Naive thymus-derived CD4-positive, alpha-beta T cell (primary cell): ENCODE measurements at regions of chr19 and their contacts with region 1.

Region 1: DNA sequence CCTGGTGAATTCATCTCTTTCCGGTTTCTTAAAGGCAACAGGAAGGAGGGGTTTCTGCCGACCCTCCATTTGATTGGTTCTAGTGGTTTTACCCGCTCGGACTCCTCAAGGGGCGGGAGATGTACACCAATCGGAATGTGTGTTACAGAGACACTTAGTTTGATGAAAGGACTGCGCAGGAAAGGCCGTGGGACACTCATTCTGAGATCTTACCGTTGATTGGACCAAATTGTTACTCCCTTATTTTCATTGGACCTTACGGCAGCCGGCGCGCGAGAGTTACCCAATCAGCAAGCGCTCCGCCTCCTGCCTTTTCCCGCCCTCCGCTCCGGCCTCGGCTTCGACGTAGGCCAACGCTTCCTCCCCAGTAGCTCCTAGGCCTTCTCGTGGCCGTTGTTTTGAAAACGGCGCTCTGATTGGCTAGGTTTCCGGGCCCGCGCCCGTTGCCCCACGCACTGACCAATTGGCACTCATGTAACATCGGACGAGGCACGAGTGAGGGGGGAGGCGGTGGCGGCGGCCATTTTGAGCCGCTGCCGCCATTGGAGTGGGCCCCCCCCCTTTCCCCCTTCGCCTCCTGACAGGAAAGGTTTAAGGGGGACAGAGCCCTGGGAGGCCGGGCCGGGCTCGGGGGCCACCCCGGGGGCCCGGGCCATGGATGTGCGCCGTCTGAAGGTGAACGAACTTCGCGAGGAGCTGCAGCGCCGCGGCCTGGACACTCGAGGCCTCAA is at the start of gene HNRNPUL1:
- DNase-seq: peak; percentile 99 to 100 (median 100)
- ATAC-seq: peak; percentile 76
- H3K4me3 ChIP-seq: peak within 1 kb of the TSS; percentile 84
- H3K4me3 Mint-ChIP-seq: peak within 1 kb of the TSS; percentile 95 to 100 (median 98)
- H3K27ac ChIP-seq: peak within 1 kb of the TSS; percentile 99
- H3K27ac Mint-ChIP-seq: peak within 1 kb of the TSS; percentile 99 to 100 (median 100)
- H3K4me1 ChIP-seq: peaks cover 22 to 30% of the 10 kb centered on the region in 2 donors
- H3K4me1 Mint-ChIP-seq: peaks cover 33 to 61% (median 41%) of the 10 kb centered on the region in 7 donors
- H3K27me3 ChIP-seq: no peaks in the 10 kb centered on the region
- H3K27me3 Mint-ChIP-seq: peaks cover 0 to 8% (median 0%) of the 10 kb centered on the region in 5 donors
- total RNA-seq, gene HNRNPUL1: 253 to 319 (median 280) TPM

Region 2: GRCh38 chr19:40425450-40426287 is 838.3 kb before region 1 on chr19 and contains the start of gene SERTAD1:
- CTCF ChIA-PET with region 1: no interaction called
- POLR2A ChIA-PET with region 1: no interaction called
- intact Hi-C with region 1: loop called in 1 of 2 experiments (anchors 5 kb)
- DNase-seq: peak; percentile 99 to 100 (median 100)
- ATAC-seq: peak; percentile 96
- H3K4me3 ChIP-seq: peak within 1 kb of the TSS; percentile 77
- H3K4me3 Mint-ChIP-seq: peak within 1 kb of the TSS; percentile 90 to 99 (median 96)
- H3K27ac ChIP-seq: peak within 1 kb of the TSS; percentile 87
- H3K27ac Mint-ChIP-seq: peak within 1 kb of the TSS; percentile 92 to 100 (median 98)
- H3K4me1 ChIP-seq: peaks cover 15 to 18% of the 10 kb centered on the region in 2 donors
- H3K4me1 Mint-ChIP-seq: peaks cover 12 to 38% (median 24%) of the 10 kb centered on the region in 7 donors
- H3K27me3 ChIP-seq: no peaks in the 10 kb centered on the region
- H3K27me3 Mint-ChIP-seq: peaks cover 0 to 2% (median 0%) of the 10 kb centered on the region in 5 donors
- total RNA-seq, gene SERTAD1: 8.1 to 30.9 (median 13.5) TPM

Region 3: DNA sequence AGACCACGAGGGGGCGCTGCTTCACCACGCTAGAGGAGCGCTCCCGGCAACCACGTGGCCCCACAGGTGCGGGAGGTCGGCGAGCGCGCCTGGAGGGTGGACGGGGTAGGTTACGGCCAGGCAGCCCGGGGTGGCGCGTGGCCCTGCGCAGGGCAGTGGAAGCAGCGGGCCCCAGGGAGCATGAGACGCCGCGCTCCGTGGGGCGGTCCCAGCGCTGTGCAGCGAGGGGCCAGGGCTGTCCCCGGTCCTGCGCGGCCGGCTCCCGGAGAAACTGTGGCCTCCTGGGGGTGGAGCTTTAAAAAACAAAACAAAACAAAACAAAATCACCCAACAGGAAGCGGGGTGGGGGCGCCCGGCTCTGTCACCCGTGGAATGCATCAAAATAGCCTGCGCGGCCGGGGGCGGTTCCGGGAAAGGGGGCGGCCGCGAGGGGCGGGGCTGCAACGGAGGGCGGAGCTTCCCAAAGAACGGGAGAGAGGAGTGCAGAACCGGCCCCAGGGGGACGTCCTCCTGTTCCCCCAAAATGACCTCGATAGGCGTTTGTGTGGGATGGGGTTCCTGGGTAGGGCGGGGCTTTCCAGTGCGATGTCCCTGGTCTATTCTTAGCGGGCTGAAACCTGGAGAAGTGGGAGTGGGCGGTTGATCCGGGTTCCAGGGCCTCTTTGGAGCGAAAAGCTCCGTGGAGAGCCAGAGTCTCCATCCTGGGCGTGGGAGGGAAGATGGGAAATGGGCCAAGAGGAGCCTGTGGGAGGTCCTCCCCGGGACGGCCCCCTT is 600.9 kb before region 1 on chr19:
- CTCF ChIA-PET with region 1: no interaction called
- POLR2A ChIA-PET with region 1: interaction called, 3 read pairs
- intact Hi-C with region 1: loop called (anchors 1 kb)
- DNase-seq: peak; percentile 81 to 96 (median 92)
- ATAC-seq: peak; percentile 96
- H3K4me3 ChIP-seq: peak overlapping the region; percentile 75
- H3K4me3 Mint-ChIP-seq: peak overlapping the region; percentile 76 to 91 (median 84)
- H3K27ac ChIP-seq: peak overlapping the region; percentile 75
- H3K27ac Mint-ChIP-seq: peak overlapping the region; percentile 67 to 91 (median 84)
- H3K4me1 ChIP-seq: peaks cover 0 to 7% of the 10 kb centered on the region in 2 donors
- H3K4me1 Mint-ChIP-seq: peaks cover 0 to 27% (median 6%) of the 10 kb centered on the region in 7 donors
- H3K27me3 ChIP-seq: no peaks in the 10 kb centered on the region
- H3K27me3 Mint-ChIP-seq: peaks cover 0 to 4% (median 0%) of the 10 kb centered on the region in 5 donors

Region 4: DNA sequence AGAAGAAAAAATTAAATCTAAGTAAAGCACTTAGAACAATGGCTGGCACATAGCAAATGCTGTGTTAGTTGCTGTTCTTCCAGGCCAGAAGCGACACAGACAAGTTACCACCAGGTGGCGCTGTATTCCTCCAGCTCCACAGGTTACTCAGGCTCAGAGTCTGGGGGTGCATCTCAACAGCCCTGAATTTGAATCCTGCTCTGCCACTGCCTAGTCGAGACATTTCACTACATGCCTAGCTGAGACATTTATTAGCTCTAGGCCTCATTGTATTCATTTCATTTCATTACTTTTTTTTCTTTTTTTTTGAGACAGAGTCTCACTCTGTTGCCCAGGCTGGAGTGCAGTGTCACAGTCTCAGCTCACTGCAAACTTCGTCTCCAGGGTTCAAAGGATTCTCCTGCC is 289.4 kb before region 1 on chr19:
- CTCF ChIA-PET with region 1: no interaction called
- POLR2A ChIA-PET with region 1: interaction called, 3 read pairs
- intact Hi-C with region 1: loop called (anchors 1 to 5 kb)
- DNase-seq: peak; percentile 54 to 84 (median 76)
- ATAC-seq: peak; percentile 87
- H3K4me3 ChIP-seq: no peak overlapping the region
- H3K4me3 Mint-ChIP-seq: peak overlapping the region in 1 of 10 donors; percentile 45
- H3K27ac ChIP-seq: no peak overlapping the region
- H3K27ac Mint-ChIP-seq: peak overlapping the region in 3 of 9 donors; percentile 53 to 74 (median 63)
- H3K4me1 ChIP-seq: peaks cover 16 to 19% of the 10 kb centered on the region in 2 donors
- H3K4me1 Mint-ChIP-seq: peaks cover 13 to 53% (median 27%) of the 10 kb centered on the region in 7 donors
- H3K27me3 ChIP-seq: no peaks in the 10 kb centered on the region
- H3K27me3 Mint-ChIP-seq: peaks cover 2 to 38% (median 3%) of the 10 kb centered on the region in 5 donors

Region 5: GRCh38 chr19:41226053-41226873 is 37.8 kb before region 1 on chr19:
- CTCF ChIA-PET with region 1: no interaction called
- POLR2A ChIA-PET with region 1: interaction called, 24 read pairs
- intact Hi-C with region 1: loop called (anchors 1 to 2 kb)
- DNase-seq: peak; percentile 18 to 66 (median 47)
- ATAC-seq: peak; percentile 69
- H3K4me3 ChIP-seq: peak overlapping the region; percentile 58
- H3K4me3 Mint-ChIP-seq: peak overlapping the region; percentile 82 to 96 (median 90)
- H3K27ac ChIP-seq: peak overlapping the region; percentile 51
- H3K27ac Mint-ChIP-seq: peak overlapping the region; percentile 31 to 90 (median 88)
- H3K4me1 ChIP-seq: peaks cover 7 to 11% of the 10 kb centered on the region in 2 donors
- H3K4me1 Mint-ChIP-seq: peaks cover 5 to 21% (median 16%) of the 10 kb centered on the region in 7 donors
- H3K27me3 ChIP-seq: no peaks in the 10 kb centered on the region
- H3K27me3 Mint-ChIP-seq: peaks cover under 1 to 14% (median 5%) of the 10 kb centered on the region in 5 donors

Region 6: DNA sequence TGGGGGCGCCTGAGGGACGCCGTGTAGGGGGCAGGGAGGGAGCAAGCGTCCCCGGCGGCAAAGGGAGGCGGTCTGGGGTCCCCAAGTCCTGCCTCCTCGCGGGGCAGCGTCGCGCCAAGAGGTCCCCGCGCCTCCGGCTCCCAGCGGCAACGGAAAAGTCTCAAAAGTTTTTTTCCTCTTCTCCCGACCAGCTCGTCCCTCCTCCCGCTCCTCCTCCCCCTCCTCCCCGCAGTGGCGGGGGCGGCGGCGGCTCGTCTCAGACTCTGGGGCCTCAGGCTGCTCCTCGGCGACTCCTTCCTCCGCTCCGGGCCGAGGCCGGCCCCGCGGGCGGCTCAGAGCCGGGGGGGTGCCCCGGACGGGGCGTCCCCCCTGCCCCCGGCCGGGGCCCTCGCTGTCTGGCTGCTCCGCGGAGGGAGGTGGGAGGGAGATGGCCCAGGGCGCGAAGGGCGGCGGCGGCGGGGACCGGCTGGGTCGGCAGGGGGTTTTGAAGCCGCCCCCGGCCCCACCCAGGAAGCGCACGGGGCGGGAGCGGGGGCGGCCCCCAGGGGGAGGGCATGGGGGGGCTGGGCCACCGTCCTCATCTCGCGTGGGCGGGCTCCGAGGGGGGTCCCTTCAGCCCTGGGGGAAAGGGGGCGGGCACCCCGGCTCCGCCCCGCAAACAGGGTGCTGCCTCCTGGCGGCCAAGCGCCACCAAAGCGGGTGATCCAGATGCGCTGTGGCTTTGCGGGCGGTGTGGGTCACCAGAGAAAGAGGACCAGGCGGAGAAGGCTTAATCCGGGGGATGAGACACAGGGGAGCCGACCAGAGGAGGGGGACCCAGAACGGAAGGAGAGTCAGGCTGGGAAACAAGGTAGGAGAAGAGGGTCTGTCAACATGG is 89.7 kb after region 1 on chr19 and contains the start of gene TGFB1:
- CTCF ChIA-PET with region 1: interaction called, 8 read pairs
- POLR2A ChIA-PET with region 1: interaction called, 95 read pairs
- intact Hi-C with region 1: loop called (anchors 1 kb)
- DNase-seq: peak; percentile 89 to 94 (median 92)
- ATAC-seq: peak; percentile 85
- H3K4me3 ChIP-seq: peak within 1 kb of the TSS; percentile 94
- H3K4me3 Mint-ChIP-seq: peak within 1 kb of the TSS; percentile 92 to 100 (median 98)
- H3K27ac ChIP-seq: peak within 1 kb of the TSS; percentile 96
- H3K27ac Mint-ChIP-seq: peak within 1 kb of the TSS; percentile 94 to 100 (median 98)
- H3K4me1 ChIP-seq: peaks cover 44 to 70% of the 10 kb centered on the region in 2 donors
- H3K4me1 Mint-ChIP-seq: peaks cover 56 to 71% (median 59%) of the 10 kb centered on the region in 7 donors
- H3K27me3 ChIP-seq: no peaks in the 10 kb centered on the region
- H3K27me3 Mint-ChIP-seq: no peaks in the 10 kb centered on the region
- total RNA-seq, gene TGFB1: 91.2 to 322 (median 185) TPM

Region 7: DNA sequence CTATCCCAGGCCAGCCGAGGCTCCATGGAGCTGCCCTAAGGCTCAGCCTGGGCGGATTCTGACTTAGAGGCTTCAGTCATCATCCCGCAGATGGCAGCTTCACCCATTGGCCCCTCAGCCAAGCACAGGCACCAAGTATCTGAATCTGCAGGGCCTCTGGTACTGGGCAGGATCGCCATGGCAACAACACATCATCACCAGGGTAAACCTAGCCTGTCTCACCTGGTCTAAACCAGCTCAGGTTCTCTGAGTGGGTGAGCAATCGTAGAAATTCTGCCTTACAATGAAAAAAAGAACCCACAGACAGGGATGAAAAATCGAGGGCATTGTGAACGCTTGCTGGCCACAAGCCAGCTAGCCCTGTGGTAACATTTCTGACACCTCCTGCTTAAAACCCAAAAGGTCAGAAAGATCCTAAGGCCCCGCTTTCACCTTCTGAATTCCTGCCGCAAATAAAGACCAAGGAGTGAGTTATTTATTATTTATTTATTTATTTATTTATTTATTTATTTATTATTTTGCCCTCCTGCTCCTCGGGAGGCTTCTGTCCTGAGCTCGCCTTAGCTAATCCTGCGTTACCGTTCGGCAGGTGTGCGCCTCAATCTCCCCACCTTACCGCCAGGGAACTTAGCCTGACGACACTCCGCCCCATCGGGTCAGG is 300.0 kb after region 1 on chr19:
- CTCF ChIA-PET with region 1: no interaction called
- POLR2A ChIA-PET with region 1: interaction called, 4 read pairs
- intact Hi-C with region 1: loop called in 1 of 2 experiments (anchors 1 kb)
- DNase-seq: peak in 6 of 9 donors; percentile 50 to 86 (median 72)
- ATAC-seq: peak; percentile 86
- H3K4me3 ChIP-seq: peak overlapping the region; percentile 49
- H3K4me3 Mint-ChIP-seq: peak overlapping the region; percentile 73 to 93 (median 87)
- H3K27ac ChIP-seq: peak overlapping the region; percentile 74
- H3K27ac Mint-ChIP-seq: peak overlapping the region; percentile 70 to 98 (median 92)
- H3K4me1 ChIP-seq: peaks cover 38 to 40% of the 10 kb centered on the region in 2 donors
- H3K4me1 Mint-ChIP-seq: peaks cover 55 to 95% (median 88%) of the 10 kb centered on the region in 7 donors
- H3K27me3 ChIP-seq: no peaks in the 10 kb centered on the region
- H3K27me3 Mint-ChIP-seq: peaks cover 0 to 8% (median 0%) of the 10 kb centered on the region in 5 donors